Activated CD8-positive, alpha-beta T cell treated with anti-CD3 and anti-CD28 coated beads, Interleukin-2, amount 10 ng/mL, durations not matched to agents 7 days and 5 days (primary cell): ENCODE measurements at regions of chr6 and their contacts with region 1.

Region 1: DNA sequence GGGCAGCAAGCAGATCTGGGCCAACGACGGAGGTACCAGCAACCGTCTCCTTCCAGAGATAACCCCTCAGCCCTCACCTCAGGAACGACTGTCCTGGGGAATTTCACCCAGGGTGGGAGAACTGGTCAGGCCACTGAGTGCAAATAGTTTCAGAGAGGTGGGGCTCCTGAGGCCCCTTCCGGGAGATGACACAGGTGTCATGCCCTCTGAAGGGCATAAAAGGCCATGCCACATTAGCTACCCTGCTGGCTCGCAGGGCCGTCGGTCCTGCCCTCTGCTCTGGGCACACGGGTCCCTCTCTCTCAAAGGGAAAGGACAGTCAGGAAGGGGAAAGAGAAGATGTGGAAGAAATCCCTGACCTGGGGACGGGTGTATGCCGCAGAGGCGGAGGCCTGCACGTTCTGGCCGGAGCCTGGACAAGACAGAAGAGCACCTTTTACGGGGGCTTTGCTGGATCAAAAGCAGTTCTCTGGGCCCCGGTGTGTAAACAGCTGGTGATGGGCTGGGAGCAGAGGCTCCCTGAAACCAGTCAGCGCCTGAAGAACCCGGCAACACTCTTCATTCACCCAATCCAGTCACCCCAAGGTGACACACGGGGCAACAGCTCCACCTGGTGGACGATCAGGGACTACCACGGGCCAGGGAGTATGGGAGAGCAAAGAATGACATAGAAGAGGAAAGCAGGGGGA is 6.4 kb upstream of the TAF8 start:
- DNase-seq: peak; percentile 96
- ATAC-seq: peak; percentile 48
- H3K4me3 Mint-ChIP-seq: peak overlapping the region; percentile 75
- H3K27ac Mint-ChIP-seq: peak overlapping the region; percentile 92
- H3K4me1 Mint-ChIP-seq: peaks cover 89% of the 10 kb centered on the region
- H3K27me3 Mint-ChIP-seq: no peaks in the 10 kb centered on the region

Region 2: GRCh38 chr6:41775293-41776181 is 268.4 kb before region 1 on chr6:
- CTCF ChIA-PET with region 1: interaction called, 286 read pairs
- POLR2A ChIA-PET with region 1: no interaction called
- DNase-seq: peak; percentile 69
- ATAC-seq: peak; percentile 48
- H3K4me3 Mint-ChIP-seq: no peak overlapping the region
- H3K27ac Mint-ChIP-seq: no peak overlapping the region
- H3K4me1 Mint-ChIP-seq: peaks cover 9% of the 10 kb centered on the region
- H3K27me3 Mint-ChIP-seq: peaks cover 2% of the 10 kb centered on the region

Region 3: DNA sequence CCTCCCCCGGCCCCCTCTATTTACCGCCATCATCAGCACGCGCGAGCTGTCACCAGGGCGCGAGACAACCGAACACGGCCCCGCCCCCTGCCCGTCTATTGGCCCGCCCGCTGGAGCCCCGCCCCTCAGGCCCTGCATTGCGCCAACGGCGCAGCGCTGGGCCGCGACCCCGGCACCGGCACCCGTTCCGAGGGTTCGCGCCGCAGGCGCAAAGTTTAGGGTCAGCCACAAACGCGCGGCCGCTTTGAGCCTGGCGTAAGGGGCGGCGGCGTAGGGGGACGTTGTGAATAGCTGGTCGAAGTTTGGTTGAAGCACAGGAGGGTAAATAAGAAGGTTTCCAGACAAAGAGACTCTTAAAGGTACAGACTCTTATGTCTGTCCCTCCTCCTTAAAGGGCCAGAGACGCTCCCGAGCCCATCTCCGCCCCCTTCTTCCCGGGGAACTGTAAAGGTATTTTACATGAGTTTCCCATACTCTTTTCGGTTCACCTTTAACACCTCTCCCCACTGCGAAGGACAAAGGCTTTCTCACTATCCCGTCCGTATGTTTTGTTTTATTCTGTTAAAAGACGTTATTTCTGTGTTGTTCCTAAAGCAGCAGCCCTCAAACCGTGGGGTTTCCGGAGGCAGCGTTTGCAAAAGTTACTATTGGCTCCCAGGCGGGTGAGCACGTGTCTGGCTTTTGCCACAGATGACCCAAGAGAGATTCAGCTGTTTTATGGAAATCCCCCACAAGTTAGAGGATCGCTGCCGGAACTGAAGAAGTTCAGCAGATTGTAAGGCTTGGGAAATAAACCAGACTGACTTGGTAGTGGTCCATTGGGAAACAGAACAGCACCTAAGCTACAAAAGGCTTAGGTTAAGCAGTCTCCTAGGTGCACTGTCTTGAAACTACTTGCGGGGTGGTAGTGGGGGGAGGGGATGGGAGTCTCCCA is 148.4 kb before region 1 on chr6 and contains the start of gene USP49:
- CTCF ChIA-PET with region 1: interaction called, 44 read pairs
- POLR2A ChIA-PET with region 1: interaction called, 11 read pairs
- DNase-seq: peak; percentile 94
- ATAC-seq: peak; percentile 97
- H3K4me3 Mint-ChIP-seq: no peak within 1 kb of the TSS
- H3K27ac Mint-ChIP-seq: peak within 1 kb of the TSS; percentile 78
- H3K4me1 Mint-ChIP-seq: peaks cover 17% of the 10 kb centered on the region
- H3K27me3 Mint-ChIP-seq: no peaks in the 10 kb centered on the region
- total RNA-seq, gene USP49: 6.2 to 7.8 TPM

Region 4: DNA sequence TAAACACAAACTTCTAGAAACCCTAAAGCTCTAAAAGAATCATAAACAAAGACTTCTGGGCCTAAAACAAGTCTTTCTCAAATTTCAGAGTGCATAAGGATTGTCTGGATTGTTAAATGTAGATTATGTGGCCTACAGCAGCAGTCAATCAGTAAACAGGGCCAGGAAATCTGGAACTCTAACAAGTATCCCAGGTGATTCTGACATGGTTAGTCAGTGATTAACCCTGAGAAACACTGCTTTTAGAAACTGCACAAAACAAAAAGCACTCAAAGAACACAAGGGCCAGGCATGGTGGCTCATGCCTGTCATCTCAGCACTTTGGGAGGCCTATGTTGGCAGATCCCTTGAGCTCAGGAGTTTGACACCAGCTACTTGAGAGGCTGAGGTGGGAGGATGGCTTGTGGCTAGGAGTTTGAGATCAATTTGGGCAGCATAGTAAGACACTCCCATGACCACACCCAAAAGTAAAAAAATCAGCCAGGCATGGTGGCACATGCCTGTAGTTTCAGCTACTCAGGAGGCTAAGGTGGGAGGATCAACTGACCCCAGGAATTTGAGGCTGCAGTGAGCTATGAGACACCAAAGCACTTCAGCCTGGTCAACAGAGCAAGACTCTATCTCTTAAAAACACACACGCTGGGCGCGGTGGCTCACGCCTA is 128.9 kb before region 1 on chr6:
- CTCF ChIA-PET with region 1: interaction called, 232 read pairs
- POLR2A ChIA-PET with region 1: interaction called, 18 read pairs
- DNase-seq: no peak
- ATAC-seq: no peak
- H3K4me3 Mint-ChIP-seq: no peak overlapping the region
- H3K27ac Mint-ChIP-seq: peak overlapping the region; percentile 43
- H3K4me1 Mint-ChIP-seq: peaks cover 24% of the 10 kb centered on the region
- H3K27me3 Mint-ChIP-seq: no peaks in the 10 kb centered on the region

Region 5: GRCh38 chr6:42009966-42010891 is 33.7 kb before region 1 on chr6:
- CTCF ChIA-PET with region 1: interaction called, 49 read pairs
- POLR2A ChIA-PET with region 1: interaction called, 31 read pairs
- DNase-seq: peak; percentile 60
- ATAC-seq: peak; percentile 69
- H3K4me3 Mint-ChIP-seq: peak overlapping the region; percentile 63
- H3K27ac Mint-ChIP-seq: peak overlapping the region; percentile 90
- H3K4me1 Mint-ChIP-seq: peaks cover 77% of the 10 kb centered on the region
- H3K27me3 Mint-ChIP-seq: no peaks in the 10 kb centered on the region

Region 6: GRCh38 chr6:42028234-42029061 is 15.5 kb before region 1 on chr6:
- CTCF ChIA-PET with region 1: interaction called, 52 read pairs
- POLR2A ChIA-PET with region 1: interaction called, 17 read pairs
- DNase-seq: no peak
- ATAC-seq: peak; percentile 29
- H3K4me3 Mint-ChIP-seq: peak overlapping the region; percentile 63
- H3K27ac Mint-ChIP-seq: peak overlapping the region; percentile 97
- H3K4me1 Mint-ChIP-seq: peaks cover 90% of the 10 kb centered on the region
- H3K27me3 Mint-ChIP-seq: no peaks in the 10 kb centered on the region